ENCODE measurements at regions of chr2 and their contacts with region 1.

Region 1: DNA sequence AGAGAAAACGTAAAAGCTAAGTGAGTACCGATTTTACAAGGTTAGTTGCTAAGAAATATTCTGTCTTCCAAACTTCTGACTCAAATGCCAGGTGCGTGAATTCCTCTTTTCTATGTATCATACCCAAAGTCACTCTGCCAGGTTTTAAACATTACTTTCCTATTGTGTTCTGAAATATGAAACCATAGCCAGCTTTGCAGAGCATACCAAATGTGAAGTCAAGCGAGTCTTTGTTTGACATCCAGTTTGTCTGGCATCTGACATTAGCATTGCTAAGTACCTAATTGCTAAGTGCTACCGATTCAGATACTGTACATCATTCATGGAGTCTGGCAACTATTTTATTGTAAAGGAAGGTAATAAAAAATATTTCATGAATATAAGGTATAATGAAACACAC is 321.9 kb upstream of the GALNT5 start:
- DNase-seq: no peak
- H3K4me3 ChIP-seq: no peak overlapping the region
- H3K27ac ChIP-seq: no peak overlapping the region
- H3K4me1 ChIP-seq: no peaks in the 10 kb centered on the region
- H3K27me3 ChIP-seq: no peaks in the 10 kb centered on the region
- CTCF ChIP-seq: no peak
- POLR2A ChIP-seq: no peak

Region 2: DNA sequence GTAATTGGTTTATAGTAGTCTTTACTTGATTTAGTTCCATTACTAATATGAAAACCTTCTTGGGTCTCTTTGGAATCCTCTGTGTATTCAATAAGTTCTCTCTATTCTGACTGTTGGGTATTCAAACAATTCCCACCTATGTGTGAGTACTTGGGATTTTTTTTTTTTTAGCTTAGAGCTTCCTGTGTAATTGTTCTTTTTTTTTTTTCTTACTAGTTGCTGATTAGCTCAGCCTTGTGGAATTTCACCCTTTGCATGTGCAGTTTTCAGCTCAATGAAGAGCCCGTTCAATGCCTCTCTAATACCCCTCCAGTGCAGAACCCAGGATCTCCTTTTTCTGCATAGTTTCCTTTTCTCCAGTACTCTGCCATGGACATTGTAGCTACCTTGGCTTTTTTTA is 17.2 kb before region 1 on chr2:
- intact Hi-C with region 1: loop called (anchors 2 kb)
- DNase-seq: no peak
- H3K4me3 ChIP-seq: no peak overlapping the region
- H3K27ac ChIP-seq: no peak overlapping the region
- H3K4me1 ChIP-seq: no peaks in the 10 kb centered on the region
- H3K27me3 ChIP-seq: no peaks in the 10 kb centered on the region
- CTCF ChIP-seq: no peak
- POLR2A ChIP-seq: no peak

Region 3: DNA sequence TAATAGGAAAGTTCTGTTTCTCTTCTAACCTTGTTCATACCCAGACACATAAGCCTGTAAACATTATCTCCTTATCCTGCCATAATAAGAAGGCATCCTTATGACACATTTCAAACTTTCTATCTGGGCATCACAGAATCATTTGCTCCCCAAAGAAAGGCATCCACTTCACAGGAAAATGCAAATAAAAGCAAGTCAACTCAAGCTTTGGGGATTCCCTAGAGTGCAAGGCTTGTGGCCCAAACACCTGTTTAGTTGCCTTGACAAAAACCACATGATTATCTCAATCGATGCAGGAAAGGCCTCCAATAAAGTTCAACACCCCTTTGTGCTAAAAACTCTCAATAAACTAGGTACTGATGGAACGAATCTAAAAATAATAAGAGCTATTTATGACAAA is 126.2 kb after region 1 on chr2:
- intact Hi-C with region 1: no loop called
- DNase-seq: no peak
- H3K4me3 ChIP-seq: no peak overlapping the region
- H3K27ac ChIP-seq: no peak overlapping the region
- H3K4me1 ChIP-seq: no peaks in the 10 kb centered on the region
- H3K27me3 ChIP-seq: no peaks in the 10 kb centered on the region
- CTCF ChIP-seq: no peak
- POLR2A ChIP-seq: no peak

Region 4: GRCh38 chr2:157269922-157270321 is 334.3 kb after region 1 on chr2:
- intact Hi-C with region 1: no loop called
- DNase-seq: no peak
- H3K4me3 ChIP-seq: no peak overlapping the region
- H3K27ac ChIP-seq: no peak overlapping the region
- H3K4me1 ChIP-seq: peaks cover 6% of the 10 kb centered on the region
- H3K27me3 ChIP-seq: no peaks in the 10 kb centered on the region
- CTCF ChIP-seq: no peak
- POLR2A ChIP-seq: no peak